ENCODE measurements at regions of chr2 and their contacts with region 1.

Region 1: GRCh38 chr2:180334514-180334913 is 327.4 kb upstream of the CWC22 start:
- DNase-seq: no peak
- ATAC-seq: peak; percentile 92
- H3K4me3 Mint-ChIP-seq: peak overlapping the region; percentile 4
- H3K27ac Mint-ChIP-seq: peak overlapping the region; percentile 64
- H3K4me1 Mint-ChIP-seq: peaks cover 24% of the 10 kb centered on the region
- H3K27me3 Mint-ChIP-seq: no peaks in the 10 kb centered on the region
- CTCF ChIP-seq: no peak

Region 2: GRCh38 chr2:180006781-180007579 is 327.5 kb before region 1 on chr2 and contains the start of gene CWC22:
- CTCF ChIA-PET with region 1: no interaction called
- POLR2A ChIA-PET with region 1: no interaction called
- intact Hi-C with region 1: loop called (anchors 2 kb)
- DNase-seq: peak; percentile 75
- ATAC-seq: peak; percentile 93
- H3K4me3 Mint-ChIP-seq: peak within 1 kb of the TSS; percentile 93
- H3K27ac Mint-ChIP-seq: peak within 1 kb of the TSS; percentile 98
- H3K4me1 Mint-ChIP-seq: peaks cover 43% of the 10 kb centered on the region
- H3K27me3 Mint-ChIP-seq: no peaks in the 10 kb centered on the region
- CTCF ChIP-seq: no peak
- total RNA-seq, gene CWC22: 27.5 and 28.9 TPM in 2 replicates

Region 3: DNA sequence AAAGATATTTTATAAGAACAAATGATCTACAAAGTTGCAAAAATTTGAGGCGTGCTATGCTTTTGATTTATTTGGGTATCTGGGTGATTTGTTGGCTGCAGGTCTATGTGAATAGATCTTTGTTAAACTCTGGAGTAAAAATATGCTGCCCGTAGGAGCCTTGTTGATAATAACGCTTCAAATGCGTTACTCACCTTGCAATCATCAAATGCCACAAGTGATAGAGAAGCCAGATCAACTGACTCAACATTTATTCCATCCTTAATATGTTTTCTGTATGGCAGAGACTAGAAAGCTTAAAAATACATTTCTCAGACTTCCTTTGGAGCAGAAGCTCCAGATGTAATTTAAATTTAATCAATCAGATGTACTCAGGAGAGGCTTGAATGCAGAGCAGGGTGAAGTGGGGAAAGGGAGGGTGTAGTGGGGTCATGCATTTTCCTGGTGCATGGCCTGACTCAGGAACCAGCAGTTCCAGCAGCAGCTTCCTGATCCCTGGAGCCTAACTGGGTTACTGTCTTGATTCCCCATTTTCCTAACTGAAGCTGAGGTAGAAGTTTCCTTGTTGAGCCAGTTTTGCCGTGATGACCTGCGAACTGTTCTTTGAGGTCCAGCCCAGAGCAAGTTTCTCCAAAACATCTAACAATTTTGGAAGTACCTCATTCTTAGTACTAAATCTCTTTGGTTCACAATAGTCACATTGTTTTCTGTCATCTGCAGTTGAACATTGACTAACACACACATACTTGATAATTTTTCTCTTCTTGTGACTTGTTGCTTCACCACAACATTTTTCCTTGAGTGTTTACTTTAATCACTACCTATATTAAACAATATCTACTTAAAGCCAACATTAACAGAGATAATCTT is 42.7 kb before region 1 on chr2:
- CTCF ChIA-PET with region 1: no interaction called
- POLR2A ChIA-PET with region 1: no interaction called
- intact Hi-C with region 1: loop called (anchors 2 kb)
- DNase-seq: no peak
- ATAC-seq: no peak
- H3K4me3 Mint-ChIP-seq: no peak overlapping the region
- H3K27ac Mint-ChIP-seq: no peak overlapping the region
- H3K4me1 Mint-ChIP-seq: no peaks in the 10 kb centered on the region
- H3K27me3 Mint-ChIP-seq: no peaks in the 10 kb centered on the region
- CTCF ChIP-seq: no peak

Region 4: DNA sequence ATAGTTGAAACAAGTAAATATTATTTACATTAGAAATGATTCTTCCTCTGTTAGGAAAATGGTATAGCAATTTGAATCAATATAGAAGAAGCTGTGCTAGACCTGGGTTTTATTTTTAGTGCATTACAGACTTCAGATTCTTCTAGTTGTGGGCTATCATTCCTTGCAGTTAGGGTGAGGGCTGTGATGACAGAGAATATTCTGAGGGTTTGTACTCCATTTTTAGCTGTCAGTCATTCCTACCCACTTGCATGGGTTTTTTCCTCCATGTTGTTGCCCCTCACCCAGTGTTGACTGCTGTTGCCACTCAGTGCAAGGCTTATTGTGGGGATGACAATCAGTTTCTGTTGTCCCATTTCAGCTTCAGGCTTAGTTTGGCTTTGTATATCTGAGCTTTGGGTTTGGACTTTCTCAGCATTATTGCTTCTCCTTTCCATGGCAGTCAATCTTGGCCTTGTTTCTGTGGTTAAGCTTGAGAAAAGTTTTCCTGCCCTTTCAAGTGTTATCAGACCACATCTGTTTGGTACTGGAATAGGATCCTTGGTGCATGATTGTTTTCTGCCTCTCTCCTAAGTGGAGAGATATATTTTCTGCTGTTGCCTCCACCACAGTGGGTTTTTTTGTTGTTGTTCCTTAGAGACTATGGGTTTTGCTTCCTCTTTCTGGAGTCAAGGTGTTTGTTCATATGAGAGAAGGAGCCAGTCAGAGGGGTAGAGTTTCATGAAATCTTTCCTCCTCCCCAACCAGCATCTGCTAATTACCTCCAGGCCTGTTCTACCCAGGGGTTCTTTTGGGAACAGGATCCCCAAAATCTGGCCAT is 14.7 kb before region 1 on chr2:
- CTCF ChIA-PET with region 1: no interaction called
- POLR2A ChIA-PET with region 1: interaction called, 8 read pairs
- intact Hi-C with region 1: loop called (anchors 1 kb)
- DNase-seq: no peak
- ATAC-seq: peak; percentile 93
- H3K4me3 Mint-ChIP-seq: no peak overlapping the region
- H3K27ac Mint-ChIP-seq: peak overlapping the region; percentile 69
- H3K4me1 Mint-ChIP-seq: peaks cover 16% of the 10 kb centered on the region
- H3K27me3 Mint-ChIP-seq: no peaks in the 10 kb centered on the region
- CTCF ChIP-seq: no peak

Region 5: DNA sequence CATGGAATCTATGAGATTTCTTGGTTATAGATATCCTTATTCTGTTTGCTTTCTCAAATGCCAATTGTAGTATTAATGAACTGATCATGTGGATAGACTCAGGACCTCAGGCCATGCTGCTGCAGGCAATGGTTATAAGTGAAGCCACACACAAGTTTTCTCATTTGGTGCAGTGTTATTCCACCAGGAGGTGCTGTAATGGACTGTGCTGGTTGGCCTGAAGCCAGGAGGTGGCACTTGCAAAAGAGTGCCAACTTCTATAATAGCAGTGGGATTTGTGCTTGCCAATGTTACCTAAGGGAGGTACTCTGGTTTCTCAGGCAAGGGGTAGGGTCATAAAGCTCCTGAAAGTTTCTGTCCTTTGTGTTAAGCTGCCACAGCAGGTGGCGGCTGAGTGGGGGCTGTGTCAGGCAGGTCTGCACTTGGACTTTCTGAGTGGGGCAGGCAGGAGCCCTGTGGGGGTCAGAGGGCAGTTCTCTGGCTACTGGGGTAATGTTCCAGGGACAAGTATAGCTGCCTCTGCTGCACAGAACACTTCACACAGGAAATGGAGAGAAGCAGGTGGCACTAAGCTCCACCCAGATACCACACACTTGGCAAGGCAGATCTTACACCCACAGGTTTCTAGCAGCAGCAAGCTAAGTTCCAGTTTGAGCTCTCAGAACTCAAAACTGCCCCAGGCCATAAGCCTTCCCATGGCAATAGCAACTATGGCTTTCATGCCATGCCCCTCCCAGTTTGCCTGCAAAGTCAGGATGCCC is 25.2 kb after region 1 on chr2:
- CTCF ChIA-PET with region 1: no interaction called
- POLR2A ChIA-PET with region 1: no interaction called
- intact Hi-C with region 1: loop called (anchors 2 kb)
- DNase-seq: no peak
- ATAC-seq: peak; percentile 95
- H3K4me3 Mint-ChIP-seq: peak overlapping the region; percentile 42
- H3K27ac Mint-ChIP-seq: peak overlapping the region; percentile 84
- H3K4me1 Mint-ChIP-seq: peaks cover 20% of the 10 kb centered on the region
- H3K27me3 Mint-ChIP-seq: no peaks in the 10 kb centered on the region
- CTCF ChIP-seq: no peak

Region 6: GRCh38 chr2:180559771-180560170 is 225.3 kb after region 1 on chr2:
- CTCF ChIA-PET with region 1: no interaction called
- POLR2A ChIA-PET with region 1: no interaction called
- intact Hi-C with region 1: no loop called
- DNase-seq: no peak
- ATAC-seq: no peak
- H3K4me3 Mint-ChIP-seq: no peak overlapping the region
- H3K27ac Mint-ChIP-seq: no peak overlapping the region
- H3K4me1 Mint-ChIP-seq: no peaks in the 10 kb centered on the region
- H3K27me3 Mint-ChIP-seq: no peaks in the 10 kb centered on the region
- CTCF ChIP-seq: no peak